Calu3 (cell line): ENCODE measurements at regions of chr1 and their contacts with region 1.

Region 1: GRCh38 chr1:200510228-200510623 is 100.4 kb upstream of the ZNF281 start:
- DNase-seq: peak; percentile 81
- H3K4me3 Mint-ChIP-seq: no peak overlapping the region
- H3K27ac Mint-ChIP-seq: no peak overlapping the region
- H3K4me1 Mint-ChIP-seq: no peaks in the 10 kb centered on the region
- H3K27me3 Mint-ChIP-seq: peaks cover 17% of the 10 kb centered on the region
- CTCF ChIP-seq: peak; percentile 78

Region 2: GRCh38 chr1:199545780-199546179 is 964.4 kb before region 1 on chr1:
- CTCF ChIA-PET with region 1: no interaction called
- intact Hi-C with region 1: loop called (anchors 10 kb)
- DNase-seq: peak; percentile 59
- H3K4me3 Mint-ChIP-seq: no peak overlapping the region
- H3K27ac Mint-ChIP-seq: no peak overlapping the region
- H3K4me1 Mint-ChIP-seq: peaks cover 8% of the 10 kb centered on the region
- H3K27me3 Mint-ChIP-seq: no peaks in the 10 kb centered on the region
- CTCF ChIP-seq: peak; percentile 16

Region 3: DNA sequence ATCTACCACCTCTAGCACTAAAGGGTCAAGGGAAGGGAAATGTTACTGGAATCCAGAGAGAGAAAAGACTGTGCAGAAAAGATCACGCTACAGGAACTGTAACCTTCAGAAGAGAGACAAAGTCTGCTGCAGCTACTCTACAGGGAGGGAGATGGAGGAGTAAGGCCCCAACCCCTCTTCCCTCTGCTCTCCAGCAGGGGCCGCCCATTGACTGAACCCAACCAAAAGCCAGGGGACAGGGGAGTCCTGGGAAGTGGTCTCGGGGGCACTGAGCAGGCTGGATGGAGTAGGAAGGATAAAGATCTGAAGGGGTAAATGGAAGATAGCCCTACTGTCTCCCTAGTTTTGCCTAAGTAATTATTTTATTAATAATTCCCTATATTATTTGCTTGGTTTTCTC is 555.5 kb before region 1 on chr1:
- CTCF ChIA-PET with region 1: interaction called, 11 read pairs
- intact Hi-C with region 1: no loop called
- DNase-seq: peak; percentile 64
- H3K4me3 Mint-ChIP-seq: no peak overlapping the region
- H3K27ac Mint-ChIP-seq: peak overlapping the region; percentile 22
- H3K4me1 Mint-ChIP-seq: peaks cover 23% of the 10 kb centered on the region
- H3K27me3 Mint-ChIP-seq: no peaks in the 10 kb centered on the region
- CTCF ChIP-seq: peak; percentile 69

Region 4: GRCh38 chr1:200139661-200140250 is 370.5 kb before region 1 on chr1:
- CTCF ChIA-PET with region 1: no interaction called
- intact Hi-C with region 1: loop called (anchors 5 kb)
- DNase-seq: peak; percentile 46
- H3K4me3 Mint-ChIP-seq: no peak overlapping the region
- H3K27ac Mint-ChIP-seq: no peak overlapping the region
- H3K4me1 Mint-ChIP-seq: no peaks in the 10 kb centered on the region
- H3K27me3 Mint-ChIP-seq: no peaks in the 10 kb centered on the region
- CTCF ChIP-seq: peak; percentile 69

Region 5: GRCh38 chr1:200198247-200198646 is 312.0 kb before region 1 on chr1:
- CTCF ChIA-PET with region 1: no interaction called
- intact Hi-C with region 1: no loop called
- DNase-seq: no peak
- H3K4me3 Mint-ChIP-seq: no peak overlapping the region
- H3K27ac Mint-ChIP-seq: no peak overlapping the region
- H3K4me1 Mint-ChIP-seq: no peaks in the 10 kb centered on the region
- H3K27me3 Mint-ChIP-seq: no peaks in the 10 kb centered on the region
- CTCF ChIP-seq: no peak

Region 6: DNA sequence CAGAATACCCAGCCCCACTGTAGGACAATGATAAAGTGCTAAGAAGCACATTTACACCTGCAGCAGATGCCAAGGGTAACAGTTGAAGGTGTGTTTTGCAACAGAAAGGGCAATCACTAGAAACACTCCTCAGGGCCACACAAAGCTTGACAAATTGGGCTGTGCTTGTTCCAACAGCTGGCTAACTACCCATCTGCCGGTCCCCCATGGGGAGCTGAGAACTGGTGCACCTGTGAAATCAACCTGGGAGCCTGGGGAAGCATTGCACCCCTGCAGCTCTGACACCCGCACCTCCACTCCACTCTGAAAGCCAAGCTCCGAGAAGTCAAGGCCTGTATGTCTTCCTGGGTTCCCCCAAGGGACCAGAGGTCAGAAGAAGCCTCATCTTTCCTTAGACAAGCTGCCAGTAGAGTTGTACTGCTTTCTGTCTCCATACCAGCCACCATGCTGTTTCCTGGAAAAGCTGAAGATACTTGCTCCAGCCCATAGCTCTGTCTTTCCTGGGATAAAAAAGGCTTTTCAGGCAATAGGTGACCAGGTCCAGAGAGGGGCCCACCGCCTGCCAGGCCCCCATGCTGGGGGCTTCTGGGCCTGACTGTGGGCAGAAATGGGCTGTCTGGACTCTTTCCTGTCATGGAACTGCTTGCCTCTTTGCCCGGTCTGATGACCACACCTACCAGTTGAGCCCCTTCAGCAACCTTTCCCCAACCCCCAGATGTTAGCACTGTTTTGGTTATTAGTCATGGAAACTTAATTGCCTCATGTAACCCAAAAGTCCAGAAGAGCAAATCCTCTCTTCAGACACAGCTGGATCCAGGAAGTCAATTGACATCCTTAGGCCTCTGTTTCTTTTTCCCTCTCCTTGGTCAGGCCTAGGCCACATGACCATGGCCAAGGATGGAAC is 16.7 kb after region 1 on chr1:
- CTCF ChIA-PET with region 1: no interaction called
- intact Hi-C with region 1: no loop called
- DNase-seq: no peak
- H3K4me3 Mint-ChIP-seq: no peak overlapping the region
- H3K27ac Mint-ChIP-seq: no peak overlapping the region
- H3K4me1 Mint-ChIP-seq: peaks cover 18% of the 10 kb centered on the region
- H3K27me3 Mint-ChIP-seq: no peaks in the 10 kb centered on the region
- CTCF ChIP-seq: no peak

Region 7: DNA sequence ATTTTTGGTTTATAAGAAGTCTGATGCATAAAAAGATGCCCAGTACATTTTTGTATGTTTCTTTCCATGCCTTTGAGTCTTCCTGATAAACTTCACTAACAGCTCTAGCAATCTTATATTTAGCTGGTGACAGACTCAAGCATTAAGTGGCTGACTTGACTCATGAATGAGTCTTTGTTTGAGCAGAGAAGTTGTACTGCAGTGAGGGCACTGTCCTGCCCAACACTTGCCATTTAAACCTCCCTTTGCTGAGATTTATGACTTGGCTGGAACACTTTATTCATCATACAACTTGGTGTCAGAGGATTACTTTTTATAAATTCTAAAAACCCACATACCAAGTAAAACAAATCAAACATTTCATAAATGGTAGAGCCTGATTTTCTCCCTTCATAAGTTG is 213.8 kb after region 1 on chr1:
- CTCF ChIA-PET with region 1: no interaction called
- intact Hi-C with region 1: no loop called
- DNase-seq: no peak
- H3K4me3 Mint-ChIP-seq: no peak overlapping the region
- H3K27ac Mint-ChIP-seq: no peak overlapping the region
- H3K4me1 Mint-ChIP-seq: no peaks in the 10 kb centered on the region
- H3K27me3 Mint-ChIP-seq: no peaks in the 10 kb centered on the region
- CTCF ChIP-seq: no peak